Ascending aorta (tissue), 2 donors: ENCODE measurements at regions of chr20 and their contacts with region 1.

Region 1: DNA sequence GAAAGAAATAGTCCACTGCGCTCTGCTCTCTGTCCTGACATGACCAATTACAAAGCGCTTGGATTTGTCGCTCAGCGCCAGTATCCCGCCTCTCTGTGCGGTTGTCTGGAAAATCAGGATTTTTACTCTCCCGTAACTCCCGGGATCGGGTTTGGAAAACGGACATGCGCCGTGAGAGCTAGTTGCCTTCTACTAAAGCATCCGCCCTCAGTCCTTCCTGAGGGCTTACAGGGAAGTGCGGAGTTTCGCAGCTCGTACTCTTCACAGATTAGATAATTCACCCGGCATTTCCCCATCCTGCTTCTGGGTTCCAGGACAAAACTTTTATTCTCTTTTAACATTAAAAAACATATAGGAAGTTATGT is 427 bp upstream of the MKKS start:
- DNase-seq: peak; percentile 82 to 97
- H3K4me3 ChIP-seq: peak overlapping the region; percentile 86 to 96
- H3K27ac ChIP-seq: peak overlapping the region; percentile 83 to 84
- H3K4me1 ChIP-seq: peaks cover 8 to 19% of the 10 kb centered on the region in 2 donors
- H3K27me3 ChIP-seq: no peaks in the 10 kb centered on the region
- CTCF ChIP-seq: no peak

Region 2: GRCh38 chr20:9616833-9617489 is 817.5 kb before region 1 on chr20:
- intact Hi-C with region 1: loop called (anchors 5 kb)
- DNase-seq: peak in 1 of 2 donors; percentile 74
- H3K4me3 ChIP-seq: no peak overlapping the region
- H3K27ac ChIP-seq: no peak overlapping the region
- H3K4me1 ChIP-seq: no peaks in the 10 kb centered on the region
- H3K27me3 ChIP-seq: no peaks in the 10 kb centered on the region
- CTCF ChIP-seq: peak; percentile 64 to 92 (median 83)

Region 3: DNA sequence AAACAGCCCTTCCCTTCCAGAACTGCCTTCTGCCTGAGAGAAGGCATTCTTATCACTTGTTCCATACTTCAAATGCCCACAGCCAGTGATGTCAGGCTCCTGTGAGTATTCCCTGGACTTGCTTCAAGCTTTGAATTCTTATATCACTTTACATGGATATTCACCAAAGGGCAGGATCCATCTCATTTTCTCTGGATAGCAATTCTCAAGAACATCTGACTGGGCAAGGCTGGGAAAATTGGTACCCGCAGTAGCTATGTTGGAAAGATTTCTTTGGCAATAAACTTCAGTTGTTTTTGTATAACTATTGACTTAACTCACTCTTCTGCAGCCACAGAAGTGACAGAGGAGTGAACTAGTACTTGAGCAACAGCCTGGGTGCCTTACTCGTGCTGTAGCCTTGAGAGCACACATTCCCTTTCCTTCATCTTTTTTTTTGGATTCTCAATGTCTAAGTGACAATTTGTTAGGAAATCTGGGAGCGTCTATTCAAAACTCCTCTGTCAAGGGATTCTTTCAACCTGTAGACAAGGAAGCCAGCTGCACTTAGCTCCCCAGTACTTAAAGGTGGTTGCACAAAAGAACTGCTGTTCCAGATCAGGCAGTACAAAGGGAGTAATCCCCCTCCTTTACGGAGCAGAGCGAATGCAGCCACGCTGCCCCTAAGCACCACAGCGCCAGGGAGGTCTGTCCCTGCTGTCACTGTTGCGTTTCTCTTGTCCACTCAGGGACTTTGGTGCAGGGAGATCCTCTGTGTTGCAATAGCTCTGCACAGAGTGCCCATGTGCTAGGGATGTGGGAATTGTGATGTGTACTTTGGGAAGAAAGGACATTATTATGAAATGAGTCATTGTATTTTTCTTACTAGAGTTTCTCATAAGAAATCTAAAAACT is 169.8 kb after region 1 on chr20:
- intact Hi-C with region 1: loop called (anchors 10 kb)
- DNase-seq: peak; percentile 39 to 91
- H3K4me3 ChIP-seq: peak overlapping the region in 1 of 2 donors; percentile 45
- H3K27ac ChIP-seq: peak overlapping the region; percentile 87 to 96
- H3K4me1 ChIP-seq: peaks cover 12 to 42% of the 10 kb centered on the region in 2 donors
- H3K27me3 ChIP-seq: no peaks in the 10 kb centered on the region
- CTCF ChIP-seq: no peak

Region 4: GRCh38 chr20:11274141-11274594 is 839.7 kb after region 1 on chr20:
- intact Hi-C with region 1: loop called (anchors 2 kb)
- DNase-seq: peak in 1 of 2 donors; percentile 69
- H3K4me3 ChIP-seq: no peak overlapping the region
- H3K27ac ChIP-seq: no peak overlapping the region
- H3K4me1 ChIP-seq: peaks cover 0 to 3% of the 10 kb centered on the region in 2 donors
- H3K27me3 ChIP-seq: no peaks in the 10 kb centered on the region
- CTCF ChIP-seq: peak; percentile 58 to 77 (median 58)